Esophagus muscularis mucosa (tissue), 4 donors: ENCODE measurements at regions of chr16 and their contacts with region 1.

Region 1: GRCh38 chr16:26569793-26570192 is 496.9 kb upstream of the C16orf82 start:
- DNase-seq: no peak
- H3K4me3 ChIP-seq: no peak overlapping the region
- H3K27ac ChIP-seq: no peak overlapping the region
- H3K4me1 ChIP-seq: no peaks in the 10 kb centered on the region
- H3K27me3 ChIP-seq: peaks cover 0 to 12% (median 0%) of the 10 kb centered on the region in 4 donors
- CTCF ChIP-seq: peak in 1 of 3 experiments; percentile 27
- EP300 ChIP-seq: no peak
- POLR2A ChIP-seq: no peak

Region 2: DNA sequence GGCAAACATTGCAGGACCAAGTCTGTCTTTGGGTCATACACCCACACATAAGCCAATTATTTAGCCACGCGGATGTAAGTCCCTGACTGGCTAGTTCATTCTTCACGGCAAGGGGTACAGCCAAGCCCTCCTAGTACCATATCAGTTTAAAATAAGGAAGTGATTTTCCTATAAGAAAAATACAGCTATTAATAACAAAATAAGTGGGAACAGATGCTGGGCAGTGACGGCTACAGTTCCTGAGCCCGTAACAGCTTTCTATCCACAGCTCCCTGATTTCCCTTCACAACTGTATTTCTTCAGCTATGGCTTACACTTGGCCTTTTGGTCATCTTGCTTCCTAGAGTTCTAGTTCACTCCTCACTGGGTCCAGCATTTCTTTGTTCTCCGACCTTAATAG is 45.5 kb before region 1 on chr16:
- intact Hi-C with region 1: loop called (anchors 10 kb)
- DNase-seq: peak; percentile 4
- H3K4me3 ChIP-seq: no peak overlapping the region
- H3K27ac ChIP-seq: no peak overlapping the region
- H3K4me1 ChIP-seq: no peaks in the 10 kb centered on the region
- H3K27me3 ChIP-seq: no peaks in the 10 kb centered on the region
- CTCF ChIP-seq: no peak
- EP300 ChIP-seq: no peak
- POLR2A ChIP-seq: no peak

Region 3: DNA sequence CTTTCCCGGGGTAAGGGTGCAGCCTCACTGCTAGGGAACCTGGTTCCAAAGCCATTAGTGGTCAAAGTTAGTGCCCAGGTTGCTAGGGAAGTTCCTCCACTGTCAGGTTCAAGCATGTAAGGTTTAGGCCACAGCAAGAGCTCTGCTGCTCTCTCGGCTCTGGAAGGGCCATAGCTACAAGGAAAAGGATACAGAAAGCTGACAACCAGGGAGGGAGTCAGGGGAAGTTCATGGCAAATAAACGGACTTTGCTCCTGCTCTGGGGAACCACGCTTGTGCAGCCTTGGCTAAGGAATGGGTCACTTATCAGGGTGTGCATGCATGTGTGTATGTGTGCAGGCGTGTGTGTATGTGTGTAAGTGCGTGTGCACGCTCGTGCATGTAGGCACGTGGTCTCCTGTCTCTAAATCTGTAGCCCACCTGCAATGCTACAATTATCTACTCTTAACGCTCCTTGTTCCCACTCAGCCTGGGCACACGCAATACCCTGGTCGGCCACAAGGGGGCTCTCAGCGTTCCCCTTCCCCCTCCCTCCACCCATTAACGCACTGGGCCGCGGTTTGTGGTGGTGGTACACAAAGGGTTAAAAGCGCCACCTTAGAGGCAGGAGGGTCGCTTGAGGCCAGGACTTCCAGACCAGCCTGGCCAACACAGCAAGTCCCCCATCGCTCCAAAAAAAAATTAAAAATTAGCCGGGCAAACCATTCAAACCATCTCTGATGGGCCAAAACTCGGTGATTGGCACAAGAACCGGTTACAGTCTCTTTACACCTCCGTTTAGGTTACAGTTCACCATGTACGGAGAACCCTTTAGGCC is 585.1 kb after region 1 on chr16:
- intact Hi-C with region 1: no loop called
- DNase-seq: no peak
- H3K4me3 ChIP-seq: no peak overlapping the region
- H3K27ac ChIP-seq: no peak overlapping the region
- H3K4me1 ChIP-seq: peaks cover 5 to 6% (median 5%) of the 10 kb centered on the region in 4 donors
- H3K27me3 ChIP-seq: no peaks in the 10 kb centered on the region
- CTCF ChIP-seq: peak; percentile 87 to 99 (median 96)
- EP300 ChIP-seq: no peak
- POLR2A ChIP-seq: no peak